ENCODE measurements at regions of chr3 and their contacts with region 1.

Region 1: DNA sequence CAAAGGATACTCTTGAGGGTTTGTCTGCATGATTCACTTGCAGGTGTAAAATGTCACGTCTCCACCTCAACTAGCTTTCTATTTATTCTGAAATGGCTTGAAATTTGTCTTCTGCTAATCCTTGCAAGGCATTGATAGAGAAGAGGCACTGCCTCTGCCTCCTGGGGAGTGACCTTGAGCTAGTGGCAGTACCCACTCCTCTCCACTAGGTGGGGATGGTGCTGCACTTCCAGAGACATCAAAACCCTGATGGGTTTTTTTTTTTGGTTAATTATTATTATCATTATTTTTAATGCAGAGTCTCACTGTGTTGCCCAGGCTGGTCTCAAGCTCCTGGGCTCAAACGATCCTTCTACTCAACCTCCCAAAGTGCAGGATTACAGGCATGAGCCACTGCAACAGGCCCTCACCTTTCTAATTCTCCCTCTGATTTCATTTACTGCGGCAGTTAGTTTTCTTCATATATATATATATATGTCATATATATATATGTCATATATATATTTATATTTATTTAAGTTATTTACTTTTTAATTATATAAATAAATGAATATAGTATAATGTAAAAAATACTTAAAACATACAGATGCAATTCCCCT is 117.6 kb upstream of the EIF1B start:
- DNase-seq: peak; percentile 65
- H3K4me3 Mint-ChIP-seq: no peak overlapping the region
- H3K27ac Mint-ChIP-seq: no peak overlapping the region
- H3K4me1 Mint-ChIP-seq: peaks cover 4% of the 10 kb centered on the region
- H3K27me3 Mint-ChIP-seq: no peaks in the 10 kb centered on the region
- CTCF ChIP-seq: peak; percentile 96

Region 2: DNA sequence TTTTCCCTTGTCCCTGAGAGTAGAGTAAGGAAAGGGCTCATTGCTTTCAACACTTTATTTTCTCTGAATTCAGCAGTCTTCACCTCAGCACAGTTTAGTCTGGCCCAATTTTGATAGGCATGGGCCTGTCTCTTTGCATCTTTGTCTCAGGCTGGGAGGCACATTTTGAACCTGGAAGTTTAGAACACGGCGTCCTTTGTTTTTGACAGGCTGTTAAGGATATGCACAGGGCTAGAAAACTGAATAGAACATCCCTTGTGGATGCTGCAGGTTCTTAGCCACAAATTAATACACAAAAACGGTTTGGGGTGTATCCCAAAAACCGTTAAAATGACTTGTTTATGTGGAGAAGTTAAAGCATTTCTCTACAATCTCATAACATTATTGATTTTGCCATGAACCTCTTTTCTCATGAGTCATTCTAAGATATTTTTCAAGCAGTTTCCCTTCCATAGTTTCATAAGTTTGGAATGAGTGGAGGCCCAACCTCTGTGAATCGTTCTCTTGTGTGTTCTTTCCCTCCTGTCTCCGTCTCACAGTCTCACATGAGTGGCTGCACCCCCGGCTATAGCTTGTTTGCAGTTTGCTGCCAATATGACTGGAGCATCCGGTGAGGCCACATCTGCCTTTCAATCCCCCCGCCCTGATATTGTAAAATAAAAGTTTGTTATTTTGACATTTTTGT is 75.3 kb before region 1 on chr3:
- CTCF ChIA-PET with region 1: no interaction called
- POLR2A ChIA-PET with region 1: no interaction called
- intact Hi-C with region 1: no loop called
- DNase-seq: peak; percentile 13
- H3K4me3 Mint-ChIP-seq: peak overlapping the region; percentile 25
- H3K27ac Mint-ChIP-seq: peak overlapping the region; percentile 90
- H3K4me1 Mint-ChIP-seq: peaks cover 22% of the 10 kb centered on the region
- H3K27me3 Mint-ChIP-seq: no peaks in the 10 kb centered on the region
- CTCF ChIP-seq: no peak

Region 3: DNA sequence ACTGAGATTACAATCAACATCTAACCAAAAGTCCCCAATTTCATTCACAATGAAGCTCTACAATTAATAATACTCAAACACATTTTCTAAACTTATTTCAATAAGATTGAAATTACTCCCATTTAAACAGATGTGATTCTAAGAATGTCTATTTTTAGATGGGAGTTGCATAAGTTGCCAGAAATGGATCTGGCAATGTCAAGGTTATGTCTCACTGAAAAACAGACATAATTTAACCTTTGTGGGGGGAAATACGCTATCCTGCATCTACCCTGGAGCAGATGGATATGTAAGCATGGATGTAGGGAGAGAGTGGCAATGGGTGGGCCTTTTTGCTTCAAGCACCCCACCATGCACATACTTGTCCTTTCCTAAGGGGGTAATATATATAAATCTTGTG is 110.8 kb after region 1 on chr3:
- CTCF ChIA-PET with region 1: interaction called, 452 read pairs
- POLR2A ChIA-PET with region 1: interaction called, 3 read pairs
- intact Hi-C with region 1: no loop called
- DNase-seq: no peak
- H3K4me3 Mint-ChIP-seq: no peak overlapping the region
- H3K27ac Mint-ChIP-seq: no peak overlapping the region
- H3K4me1 Mint-ChIP-seq: peaks cover 9% of the 10 kb centered on the region
- H3K27me3 Mint-ChIP-seq: no peaks in the 10 kb centered on the region
- CTCF ChIP-seq: no peak